Uterus (tissue), 4 donors: ENCODE measurements at regions of chr4 and their contacts with region 1.

Region 1: GRCh38 chr4:139083956-139084803 is 68.6 kb downstream of the NOCT start:
- DNase-seq: peak; percentile 83 to 87
- H3K4me3 ChIP-seq: peak overlapping the region; percentile 64
- H3K27ac ChIP-seq: peak overlapping the region; percentile 88 to 94
- H3K4me1 ChIP-seq: peaks cover 0 to 5% of the 10 kb centered on the region in 2 donors
- H3K27me3 ChIP-seq: no peaks in the 10 kb centered on the region
- CTCF ChIP-seq: peak in 3 of 4 experiments; percentile 41 to 51 (median 46)
- POLR2A ChIP-seq: peak in 1 of 2 donors; percentile 40

Region 2: GRCh38 chr4:139007640-139008039 is 76.5 kb before region 1 on chr4:
- intact Hi-C with region 1: no loop called
- DNase-seq: no peak
- H3K4me3 ChIP-seq: no peak overlapping the region
- H3K27ac ChIP-seq: no peak overlapping the region
- H3K4me1 ChIP-seq: no peaks in the 10 kb centered on the region
- H3K27me3 ChIP-seq: no peaks in the 10 kb centered on the region
- CTCF ChIP-seq: no peak
- POLR2A ChIP-seq: no peak

Region 3: DNA sequence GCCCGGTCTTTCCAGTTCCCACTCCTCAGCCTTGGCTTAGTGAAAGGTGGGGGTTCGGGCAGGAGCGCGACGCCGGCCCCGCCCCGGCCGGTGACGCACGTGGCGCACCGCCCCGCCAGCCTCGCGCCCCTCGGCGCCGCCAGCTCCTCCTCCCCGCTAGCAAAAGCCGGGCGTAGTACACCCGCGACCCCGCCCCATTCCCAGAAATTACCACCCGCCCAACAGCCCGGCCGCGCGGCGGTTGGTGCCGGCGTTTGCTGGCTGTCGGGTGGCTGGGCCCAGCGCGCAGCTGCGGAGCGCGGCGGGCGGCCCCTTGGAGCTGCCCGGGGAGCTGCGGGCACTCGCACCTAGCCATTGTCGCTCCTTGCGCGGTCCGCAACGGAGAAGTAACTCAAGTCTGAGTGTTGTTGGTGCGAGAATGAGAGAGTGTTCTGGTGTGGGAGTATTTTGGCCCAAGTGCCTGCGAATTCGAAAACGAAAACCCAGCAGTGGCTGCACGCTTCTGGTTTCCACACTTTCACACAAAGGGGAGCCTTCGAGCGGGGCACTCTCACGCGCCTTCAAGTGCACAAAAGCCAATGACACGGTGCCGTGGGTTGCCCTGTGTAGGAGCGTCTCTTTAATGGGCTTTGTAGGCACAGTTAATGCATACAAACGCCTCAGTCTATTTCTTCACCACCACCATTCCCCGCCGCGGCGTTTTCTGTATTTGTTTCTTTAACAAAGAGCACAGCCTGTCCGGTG is 93.9 kb after region 1 on chr4:
- intact Hi-C with region 1: loop called (anchors 10 kb)
- DNase-seq: peak; percentile 94 to 95
- H3K4me3 ChIP-seq: peak overlapping the region; percentile 75 to 77
- H3K27ac ChIP-seq: peak overlapping the region; percentile 98
- H3K4me1 ChIP-seq: no peaks in the 10 kb centered on the region
- H3K27me3 ChIP-seq: no peaks in the 10 kb centered on the region
- CTCF ChIP-seq: peak in 1 of 4 experiments; percentile 3
- POLR2A ChIP-seq: peak; percentile 91 to 93